ENCODE measurements at regions of chr1 and their contacts with region 1.

Region 1: GRCh38 chr1:8031176-8031785 is 5.2 kb upstream of the ERRFI1 start:
- DNase-seq: peak; percentile 34
- CTCF ChIP-seq: peak; percentile 20

Region 2: GRCh38 chr1:7885513-7886404 is 145.5 kb before region 1 on chr1:
- in situ Hi-C with region 1: no loop called
- DNase-seq: peak; percentile 43
- CTCF ChIP-seq: no peak

Region 3: GRCh38 chr1:7902478-7903085 is 128.7 kb before region 1 on chr1:
- in situ Hi-C with region 1: no loop called
- DNase-seq: peak; percentile 78
- CTCF ChIP-seq: peak; percentile 80

Region 4: GRCh38 chr1:8314346-8315280 is 283.3 kb after region 1 on chr1:
- in situ Hi-C with region 1: loop called (anchors 10 kb)
- DNase-seq: peak; percentile 80
- CTCF ChIP-seq: peak; percentile 74